ENCODE measurements at regions of chr3 and their contacts with region 1.

Region 1: GRCh38 chr3:58305882-58306711 is at the starts of genes HTD2 and RPP14:
- DNase-seq: peak; percentile 99
- ATAC-seq: peak; percentile 89
- H3K4me3 Mint-ChIP-seq: peak within 1 kb of the TSS; percentile 97
- H3K27ac Mint-ChIP-seq: peak within 1 kb of the TSS; percentile 100
- H3K4me1 Mint-ChIP-seq: peaks cover 22% of the 10 kb centered on the region
- H3K27me3 Mint-ChIP-seq: peaks cover 18% of the 10 kb centered on the region
- total RNA-seq, gene HTD2: 7.5 to 8.1 TPM
- total RNA-seq, gene RPP14: 13.9 to 14.4 TPM

Region 2: GRCh38 chr3:58237238-58237940 is 68.7 kb before region 1 on chr3 and contains the start of gene ABHD6:
- POLR2A ChIA-PET with region 1: interaction called, 11 read pairs
- DNase-seq: peak; percentile 93
- ATAC-seq: peak; percentile 86
- H3K4me3 Mint-ChIP-seq: peak within 1 kb of the TSS; percentile 94
- H3K27ac Mint-ChIP-seq: peak within 1 kb of the TSS; percentile 80
- H3K4me1 Mint-ChIP-seq: peaks cover 13% of the 10 kb centered on the region
- H3K27me3 Mint-ChIP-seq: peaks cover 28% of the 10 kb centered on the region
- total RNA-seq, gene ABHD6: 4.4 to 5.3 TPM

Region 3: GRCh38 chr3:58332575-58333188 is 26.6 kb after region 1 on chr3 and contains the start of gene PXK:
- POLR2A ChIA-PET with region 1: interaction called, 13 read pairs
- DNase-seq: peak; percentile 90
- ATAC-seq: peak; percentile 88
- H3K4me3 Mint-ChIP-seq: peak within 1 kb of the TSS; percentile 100
- H3K27ac Mint-ChIP-seq: peak within 1 kb of the TSS; percentile 97
- H3K4me1 Mint-ChIP-seq: peaks cover 32% of the 10 kb centered on the region
- H3K27me3 Mint-ChIP-seq: no peaks in the 10 kb centered on the region
- total RNA-seq, gene PXK: 38.6 to 41.5 TPM

Region 4: GRCh38 chr3:58404396-58404795 is 98.3 kb after region 1 on chr3:
- POLR2A ChIA-PET with region 1: no interaction called
- DNase-seq: no peak
- ATAC-seq: no peak
- H3K4me3 Mint-ChIP-seq: no peak overlapping the region
- H3K27ac Mint-ChIP-seq: no peak overlapping the region
- H3K4me1 Mint-ChIP-seq: peaks cover 2% of the 10 kb centered on the region
- H3K27me3 Mint-ChIP-seq: no peaks in the 10 kb centered on the region

Region 5: GRCh38 chr3:58433400-58434169 is 127.5 kb after region 1 on chr3 and contains the start of gene PDHB:
- POLR2A ChIA-PET with region 1: interaction called, 12 read pairs
- DNase-seq: peak; percentile 90
- ATAC-seq: peak; percentile 93
- H3K4me3 Mint-ChIP-seq: peak within 1 kb of the TSS; percentile 95
- H3K27ac Mint-ChIP-seq: peak within 1 kb of the TSS; percentile 88
- H3K4me1 Mint-ChIP-seq: peaks cover 24% of the 10 kb centered on the region
- H3K27me3 Mint-ChIP-seq: no peaks in the 10 kb centered on the region
- total RNA-seq, gene PDHB: 47.8 to 51.2 TPM

Region 6: DNA sequence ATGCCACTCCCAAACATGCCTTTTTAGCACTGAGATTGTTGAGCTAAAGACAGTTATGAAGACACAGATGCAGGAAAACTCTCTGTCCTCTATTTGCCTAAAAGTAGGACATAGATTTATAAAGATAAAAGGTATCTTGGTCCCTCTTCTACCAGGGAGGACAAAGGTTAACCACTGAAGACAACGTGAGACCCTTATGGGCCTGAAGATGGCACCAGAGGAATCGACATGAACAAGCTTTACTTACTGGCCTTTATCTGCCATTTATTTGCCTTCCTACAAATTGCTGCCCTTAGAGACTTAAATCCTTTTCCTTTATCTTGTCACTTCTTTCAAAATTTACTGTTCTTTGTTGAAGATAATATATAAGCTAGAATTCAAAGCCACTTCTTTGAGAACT is 470.1 kb after region 1 on chr3:
- POLR2A ChIA-PET with region 1: no interaction called
- DNase-seq: no peak
- ATAC-seq: no peak
- H3K4me3 Mint-ChIP-seq: no peak overlapping the region
- H3K27ac Mint-ChIP-seq: no peak overlapping the region
- H3K4me1 Mint-ChIP-seq: no peaks in the 10 kb centered on the region
- H3K27me3 Mint-ChIP-seq: no peaks in the 10 kb centered on the region